ENCODE measurements at regions of chr1 and their contacts with region 1.

Region 1: GRCh38 chr1:84442256-84442655 is 36.8 kb upstream of the RPF1 start:
- DNase-seq: peak; percentile 93
- H3K4me3 ChIP-seq: no peak overlapping the region
- H3K27ac ChIP-seq: 0 out of 2 replicates have a peak overlapping the region, but pooled peaks have one; percentile 13
- H3K4me1 ChIP-seq: peaks cover 11% of the 10 kb centered on the region
- H3K27me3 ChIP-seq: no peaks in the 10 kb centered on the region

Region 2: GRCh38 chr1:84603941-84604830 is 161.9 kb after region 1 on chr1:
- in situ Hi-C with region 1: loop called (anchors 5 kb)
- DNase-seq: peak; percentile 98
- H3K4me3 ChIP-seq: peak overlapping the region; percentile 76
- H3K27ac ChIP-seq: peak overlapping the region; percentile 87
- H3K4me1 ChIP-seq: peaks cover 32% of the 10 kb centered on the region
- H3K27me3 ChIP-seq: no peaks in the 10 kb centered on the region

Region 3: GRCh38 chr1:84772428-84772943 is 330.2 kb after region 1 on chr1:
- in situ Hi-C with region 1: loop called (anchors 10 kb)
- DNase-seq: peak; percentile 81
- H3K4me3 ChIP-seq: no peak overlapping the region
- H3K27ac ChIP-seq: no peak overlapping the region
- H3K4me1 ChIP-seq: peaks cover 3% of the 10 kb centered on the region; the same call in 1 of the 2 replicates
- H3K27me3 ChIP-seq: no peaks in the 10 kb centered on the region

Measured in GM23248 (cell line).